Activated CD4-positive, alpha-beta T cell treated with anti-CD3 and anti-CD28 coated beads, Interleukin-2, amount 10 ng/mL, durations not matched to agents 7 days and 5 days (primary cell): ENCODE measurements at regions of chr13 and their contacts with region 1.

Region 1: GRCh38 chr13:48492470-48493065 is 40.3 kb downstream of the RCBTB2 start:
- DNase-seq: peak; percentile 86
- H3K4me3 Mint-ChIP-seq: no peak overlapping the region
- H3K27ac Mint-ChIP-seq: no peak overlapping the region
- H3K4me1 Mint-ChIP-seq: peaks cover 62% of the 10 kb centered on the region
- H3K27me3 Mint-ChIP-seq: no peaks in the 10 kb centered on the region

Region 2: GRCh38 chr13:48476215-48476614 is 16.4 kb before region 1 on chr13:
- CTCF ChIA-PET with region 1: no interaction called
- POLR2A ChIA-PET with region 1: no interaction called
- DNase-seq: no peak
- H3K4me3 Mint-ChIP-seq: no peak overlapping the region
- H3K27ac Mint-ChIP-seq: peak overlapping the region; percentile 62
- H3K4me1 Mint-ChIP-seq: peaks cover 2% of the 10 kb centered on the region
- H3K27me3 Mint-ChIP-seq: no peaks in the 10 kb centered on the region

Region 3: DNA sequence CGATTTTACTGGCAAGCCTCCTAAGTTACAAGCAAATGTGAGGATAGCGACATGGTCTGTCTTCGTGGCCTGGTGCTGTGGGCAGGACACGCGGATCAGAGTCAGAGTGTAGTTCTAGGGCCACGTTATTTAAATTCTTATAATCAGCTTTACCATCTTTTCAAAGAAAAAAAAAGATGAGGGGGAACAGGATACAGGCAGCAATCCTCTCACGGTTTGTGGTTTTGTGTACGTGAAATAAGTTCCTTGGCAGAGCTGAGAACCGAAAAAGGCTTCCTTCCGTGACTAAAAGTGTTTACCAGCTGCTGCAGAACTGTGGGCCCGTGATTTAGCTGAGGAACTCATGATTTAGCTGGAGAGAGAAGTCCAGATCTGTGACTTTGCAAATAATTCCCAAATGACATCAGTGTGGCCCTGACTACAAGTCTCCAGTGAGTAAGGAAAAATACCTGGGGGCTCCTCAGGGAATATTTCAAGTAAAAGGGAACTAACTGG is 13.1 kb after region 1 on chr13:
- CTCF ChIA-PET with region 1: interaction called, 3 read pairs
- POLR2A ChIA-PET with region 1: interaction called, 13 read pairs
- DNase-seq: peak; percentile 82
- H3K4me3 Mint-ChIP-seq: peak overlapping the region; percentile 63
- H3K27ac Mint-ChIP-seq: peak overlapping the region; percentile 98
- H3K4me1 Mint-ChIP-seq: peaks cover 89% of the 10 kb centered on the region
- H3K27me3 Mint-ChIP-seq: no peaks in the 10 kb centered on the region

Region 4: DNA sequence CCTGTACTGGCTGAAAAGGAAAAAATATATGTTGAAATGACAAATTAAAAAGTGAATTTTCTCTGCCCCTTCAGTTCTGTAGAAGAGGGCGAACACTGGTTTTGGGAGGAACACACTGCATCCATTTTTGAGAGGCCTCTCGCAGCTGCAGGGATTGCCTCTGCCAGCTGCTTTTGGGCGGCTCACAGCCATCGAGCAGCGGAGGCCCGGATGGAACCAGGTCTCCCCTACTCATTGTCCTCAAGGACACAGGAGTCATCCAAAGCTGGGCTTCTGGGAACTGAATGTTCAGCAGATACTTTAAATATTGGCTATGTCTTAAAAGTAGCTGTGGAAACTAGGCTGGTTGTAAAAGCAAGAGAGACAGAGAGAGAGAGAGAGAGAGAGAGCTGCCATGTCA is 23.2 kb after region 1 on chr13:
- CTCF ChIA-PET with region 1: no interaction called
- POLR2A ChIA-PET with region 1: no interaction called
- DNase-seq: no peak
- H3K4me3 Mint-ChIP-seq: no peak overlapping the region
- H3K27ac Mint-ChIP-seq: no peak overlapping the region
- H3K4me1 Mint-ChIP-seq: peaks cover 8% of the 10 kb centered on the region
- H3K27me3 Mint-ChIP-seq: no peaks in the 10 kb centered on the region